ENCODE measurements at regions of chr4 and their contacts with region 1.

Region 1: GRCh38 chr4:122827258-122827878 is 737 bp downstream of the FGF2 start:
- DNase-seq: no peak
- H3K4me3 ChIP-seq: peak overlapping the region; percentile 94
- H3K27me3 ChIP-seq: no peaks in the 10 kb centered on the region
- CTCF ChIP-seq: peak; percentile 22; the same call in 1 of the 2 replicates

Region 2: GRCh38 chr4:122562449-122562848 is 264.9 kb before region 1 on chr4:
- CTCF ChIA-PET with region 1: no interaction called
- POLR2A ChIA-PET with region 1: no interaction called
- DNase-seq: no peak
- H3K4me3 ChIP-seq: no peak overlapping the region
- H3K27me3 ChIP-seq: no peaks in the 10 kb centered on the region
- CTCF ChIP-seq: no peak

Region 3: DNA sequence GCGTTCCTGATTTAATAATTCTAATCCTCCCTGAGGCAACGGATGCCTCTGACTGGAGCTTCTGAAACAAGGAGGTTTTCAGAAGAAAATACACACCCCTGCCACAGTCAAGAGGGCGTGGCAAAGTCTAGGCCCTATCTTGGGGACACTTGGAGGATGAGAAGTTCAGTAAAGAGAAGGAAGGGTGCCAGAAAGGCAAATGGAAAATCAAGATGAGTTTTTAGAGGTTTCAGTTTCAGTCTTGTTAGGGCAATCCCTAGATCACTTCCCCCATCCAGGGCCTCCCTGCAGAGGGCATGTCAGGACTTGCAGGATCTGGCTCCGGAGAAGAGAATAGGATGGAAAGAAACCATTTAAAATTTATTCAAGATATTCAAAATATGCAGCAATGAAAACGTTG is 29.3 kb before region 1 on chr4:
- CTCF ChIA-PET with region 1: no interaction called
- POLR2A ChIA-PET with region 1: interaction called, 14 read pairs
- DNase-seq: peak; percentile 97
- H3K4me3 ChIP-seq: no peak overlapping the region
- H3K27me3 ChIP-seq: no peaks in the 10 kb centered on the region
- CTCF ChIP-seq: peak; percentile 23; the same call in 1 of the 2 replicates

Region 4: DNA sequence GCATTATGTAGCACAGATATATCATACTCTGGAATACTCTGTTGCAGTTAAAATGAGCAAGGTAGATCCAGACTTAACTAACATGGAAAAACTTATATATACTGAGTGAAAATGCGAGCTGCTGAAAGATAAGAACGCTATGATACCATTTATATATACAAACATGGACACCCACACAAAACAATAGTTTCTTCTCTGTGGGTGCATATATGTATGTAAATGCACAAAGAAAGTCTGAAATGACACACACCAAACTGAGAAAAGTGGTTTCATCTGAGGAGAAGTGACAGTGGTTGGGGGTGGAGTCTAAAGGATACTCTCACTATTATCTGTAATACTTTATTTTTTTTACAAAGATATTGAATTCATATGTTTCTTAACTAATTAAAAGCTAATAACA is 12.9 kb before region 1 on chr4:
- CTCF ChIA-PET with region 1: no interaction called
- POLR2A ChIA-PET with region 1: no interaction called
- DNase-seq: no peak
- H3K4me3 ChIP-seq: no peak overlapping the region
- H3K27me3 ChIP-seq: no peaks in the 10 kb centered on the region
- CTCF ChIP-seq: no peak

Measured in BJ (cell line).